PC-9 (cell line): ENCODE measurements at regions of chr7 and their contacts with region 1.

Region 1: DNA sequence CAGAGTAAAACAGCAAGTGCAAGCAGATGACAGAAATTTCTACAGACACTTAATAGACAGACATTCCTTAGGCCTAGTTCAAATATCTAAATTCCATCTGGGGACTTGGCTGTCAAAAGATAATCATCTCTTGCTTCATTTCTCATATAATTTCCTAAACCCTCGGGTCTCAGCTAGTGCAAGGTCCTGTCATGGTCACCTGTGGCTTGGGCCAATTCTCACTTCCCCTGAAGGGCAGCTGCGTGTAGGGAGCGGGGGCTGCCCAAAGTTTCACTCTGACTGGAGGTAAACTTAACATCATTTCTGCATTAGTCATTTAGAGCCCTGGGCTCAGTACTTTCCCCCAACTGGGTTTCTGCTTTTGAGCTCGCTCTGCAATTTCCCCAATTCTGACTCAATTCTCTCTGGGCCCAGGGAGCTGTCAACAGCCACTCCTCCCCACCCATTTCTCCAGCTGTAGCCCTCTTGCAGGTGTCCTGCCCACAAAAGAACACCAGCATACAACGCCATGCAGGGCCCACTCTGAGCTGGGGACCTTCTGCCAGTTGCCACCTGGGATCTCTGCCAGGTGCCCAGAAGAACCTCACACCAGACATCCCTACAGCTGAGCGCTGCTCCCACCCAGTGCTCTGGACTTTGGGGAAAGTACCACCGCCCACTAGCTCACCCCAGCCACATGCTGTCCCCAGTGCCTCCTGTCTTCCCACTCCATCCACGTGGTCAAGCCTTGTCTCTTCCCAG is 38.0 kb downstream of the VOPP1 start:
- DNase-seq: peak; percentile 71 to 100
- H3K4me3 ChIP-seq: no peak overlapping the region; the same call in 1 of the 2 replicates
- H3K27ac ChIP-seq: peak overlapping the region; percentile 74
- H3K4me1 ChIP-seq: peaks cover 65% of the 10 kb centered on the region
- H3K27me3 ChIP-seq: no peaks in the 10 kb centered on the region
- CTCF ChIP-seq: no peak

Region 2: DNA sequence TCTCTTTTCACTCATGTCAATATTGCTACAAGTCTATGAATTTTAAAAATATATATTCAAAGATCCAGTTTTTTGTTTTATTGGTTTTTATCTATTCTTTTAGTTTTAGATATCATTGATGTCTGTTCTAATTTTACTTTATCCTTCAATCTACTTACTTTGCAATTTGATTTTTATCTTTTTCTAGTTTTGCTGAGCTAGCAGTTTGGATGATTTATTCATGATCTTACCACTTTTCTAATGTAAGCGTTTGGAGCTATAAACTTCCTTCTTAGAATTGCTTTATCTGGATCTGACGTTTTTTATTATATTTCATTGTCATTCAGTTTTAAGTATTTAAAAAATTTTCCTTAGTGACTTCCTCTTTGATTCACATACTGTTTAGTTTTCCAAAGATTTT is 1656.7 kb before region 1 on chr7:
- CTCF ChIA-PET with region 1: no interaction called
- POLR2A ChIA-PET with region 1: interaction called, 13 read pairs
- intact Hi-C with region 1: no loop called
- DNase-seq: no peak
- H3K4me3 ChIP-seq: no peak overlapping the region
- H3K27ac ChIP-seq: no peak overlapping the region
- H3K4me1 ChIP-seq: no peaks in the 10 kb centered on the region
- H3K27me3 ChIP-seq: no peaks in the 10 kb centered on the region
- CTCF ChIP-seq: no peak

Region 3: GRCh38 chr7:55030314-55030713 is 504.0 kb before region 1 on chr7:
- CTCF ChIA-PET with region 1: no interaction called
- POLR2A ChIA-PET with region 1: no interaction called
- intact Hi-C with region 1: no loop called
- DNase-seq: peak in 1 of 2 experiments; percentile 59
- H3K4me3 ChIP-seq: no peak overlapping the region
- H3K27ac ChIP-seq: peak overlapping the region; percentile 31
- H3K4me1 ChIP-seq: peaks cover 78% of the 10 kb centered on the region
- H3K27me3 ChIP-seq: no peaks in the 10 kb centered on the region
- CTCF ChIP-seq: no peak

Region 4: DNA sequence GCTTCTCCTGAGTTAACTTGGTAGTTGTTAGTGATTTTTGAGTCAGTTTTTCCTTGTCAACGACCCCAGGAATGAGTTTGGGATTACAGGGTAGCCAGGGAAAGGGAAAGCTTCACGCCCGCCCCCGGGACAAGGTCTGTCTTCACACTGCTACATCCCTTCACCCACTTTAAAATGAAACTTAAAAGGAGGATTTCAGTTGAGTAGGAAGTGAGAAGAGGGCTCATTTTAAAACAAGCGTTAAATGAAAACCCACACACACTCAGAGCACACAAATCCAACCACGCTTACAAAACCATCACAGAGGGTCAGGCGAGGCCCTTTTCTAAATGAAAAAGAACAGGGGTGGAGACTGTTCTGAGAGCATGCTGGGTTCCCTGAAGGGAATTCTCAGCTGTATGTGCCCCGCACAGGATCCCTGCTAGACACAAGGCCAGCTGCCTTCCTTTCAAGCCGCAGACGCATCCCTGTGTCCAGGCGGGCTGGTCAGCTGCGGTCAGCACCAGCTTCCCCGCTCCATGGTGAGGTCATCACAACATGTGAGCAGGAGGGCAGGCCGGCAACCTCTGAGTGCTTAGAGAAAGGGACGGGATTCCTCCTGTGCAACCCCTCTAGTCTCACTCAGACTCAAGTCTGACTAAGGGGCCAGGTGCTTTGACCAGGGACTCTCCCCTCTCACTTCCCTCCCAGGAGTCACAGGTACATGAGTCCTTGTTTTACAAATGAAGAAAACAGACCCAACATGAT is 403.8 kb before region 1 on chr7:
- CTCF ChIA-PET with region 1: no interaction called
- POLR2A ChIA-PET with region 1: no interaction called
- intact Hi-C with region 1: no loop called
- DNase-seq: peak in 1 of 2 experiments; percentile 58
- H3K4me3 ChIP-seq: no peak overlapping the region
- H3K27ac ChIP-seq: peak overlapping the region; percentile 92
- H3K4me1 ChIP-seq: peaks cover 93% of the 10 kb centered on the region
- H3K27me3 ChIP-seq: no peaks in the 10 kb centered on the region
- CTCF ChIP-seq: no peak

Region 5: DNA sequence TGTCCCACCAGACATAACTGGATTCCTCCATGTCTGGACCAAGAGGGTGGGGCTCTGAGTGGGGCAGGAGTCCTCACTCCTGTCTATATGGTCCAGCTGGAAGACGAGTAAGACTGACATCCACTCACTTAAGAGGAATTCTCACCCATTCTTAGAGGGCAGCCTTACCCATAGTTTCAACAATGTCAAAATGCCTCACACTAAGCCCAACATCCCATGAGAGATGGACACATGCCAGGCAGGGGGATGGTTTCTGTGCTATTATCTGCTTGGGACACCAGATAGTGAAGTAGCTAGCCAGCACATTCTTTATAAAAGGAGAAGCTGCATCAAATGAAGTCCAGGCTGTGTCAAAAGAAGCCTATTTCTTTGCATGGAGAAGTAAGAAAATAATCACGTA is 173.9 kb before region 1 on chr7:
- CTCF ChIA-PET with region 1: no interaction called
- POLR2A ChIA-PET with region 1: no interaction called
- intact Hi-C with region 1: no loop called
- DNase-seq: no peak
- H3K4me3 ChIP-seq: no peak overlapping the region
- H3K27ac ChIP-seq: no peak overlapping the region
- H3K4me1 ChIP-seq: peaks cover 10% of the 10 kb centered on the region
- H3K27me3 ChIP-seq: peaks cover 55% of the 10 kb centered on the region
- CTCF ChIP-seq: no peak

Region 6: DNA sequence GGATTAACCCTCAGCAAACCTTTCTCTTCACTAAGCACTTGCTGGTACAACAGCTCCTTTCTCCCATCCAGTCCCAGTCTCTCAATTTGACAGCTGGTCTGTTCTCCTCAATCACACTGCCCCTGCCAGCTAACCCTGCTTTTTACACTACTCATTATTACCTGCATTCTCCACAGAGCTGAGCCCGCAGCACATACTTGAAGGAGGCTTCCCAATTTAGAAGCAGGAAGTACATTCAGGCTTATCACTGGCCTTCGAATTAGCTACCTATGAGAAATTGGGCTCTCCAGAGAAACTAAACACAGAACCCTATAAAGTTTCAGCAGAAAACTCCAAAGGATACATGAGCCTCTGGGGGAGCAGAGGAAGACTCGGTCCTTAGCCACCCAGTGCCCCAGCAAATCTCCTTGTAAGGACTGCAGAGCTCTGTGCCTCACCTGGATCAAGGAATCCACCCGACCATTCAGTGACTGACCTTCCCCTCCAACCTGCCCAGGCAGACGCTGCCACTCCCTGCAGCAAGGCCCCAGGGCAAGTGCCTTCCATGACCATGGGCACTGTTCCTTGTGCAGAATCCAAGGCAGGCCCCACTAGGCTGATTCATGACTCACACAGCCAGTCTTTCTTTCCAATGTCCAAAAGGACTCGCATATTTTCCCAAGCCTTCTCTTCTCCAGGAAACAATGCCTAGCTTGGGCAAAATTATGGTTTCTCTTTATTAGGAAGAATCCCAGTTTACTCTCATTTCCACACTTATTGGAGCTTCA is 30.1 kb before region 1 on chr7:
- CTCF ChIA-PET with region 1: interaction called, 3 read pairs
- POLR2A ChIA-PET with region 1: no interaction called
- intact Hi-C with region 1: loop called (anchors 1 kb)
- DNase-seq: peak; percentile 68 to 91
- H3K4me3 ChIP-seq: no peak overlapping the region
- H3K27ac ChIP-seq: peak overlapping the region; percentile 23
- H3K4me1 ChIP-seq: peaks cover 29% of the 10 kb centered on the region
- H3K27me3 ChIP-seq: no peaks in the 10 kb centered on the region
- CTCF ChIP-seq: no peak

Region 7: DNA sequence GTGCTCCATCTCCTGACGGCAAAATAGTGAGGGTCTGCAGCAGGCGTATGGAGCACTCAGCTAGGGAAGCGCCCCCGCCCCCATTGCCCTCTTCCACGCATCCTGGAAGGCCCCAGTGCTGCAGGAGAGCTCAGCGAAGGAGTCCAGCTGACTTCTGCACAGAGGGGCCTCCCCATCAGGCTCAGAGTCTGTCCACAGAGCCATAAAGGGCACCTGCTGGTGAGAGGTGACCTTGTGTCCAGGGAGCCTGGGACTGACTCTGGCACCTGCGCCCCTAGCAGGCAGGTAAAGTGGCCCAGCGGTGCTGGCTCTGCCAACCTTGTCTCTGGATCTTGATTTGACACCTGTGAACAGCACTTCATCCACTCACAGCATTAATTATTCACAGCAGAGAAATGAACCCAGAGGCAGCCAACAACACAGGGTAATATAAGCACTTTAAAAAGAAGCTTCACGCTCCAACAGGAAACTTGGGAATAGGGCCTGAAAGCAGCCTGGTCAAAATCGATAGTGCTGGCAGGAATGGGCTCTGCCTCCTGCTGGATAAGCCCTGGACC is 21.6 kb before region 1 on chr7:
- CTCF ChIA-PET with region 1: interaction called, 6 read pairs
- POLR2A ChIA-PET with region 1: interaction called, 16 read pairs
- intact Hi-C with region 1: no loop called
- DNase-seq: no peak
- H3K4me3 ChIP-seq: no peak overlapping the region
- H3K27ac ChIP-seq: no peak overlapping the region
- H3K4me1 ChIP-seq: no peaks in the 10 kb centered on the region
- H3K27me3 ChIP-seq: no peaks in the 10 kb centered on the region
- CTCF ChIP-seq: no peak

Region 8: GRCh38 chr7:55546829-55547228 is 12.5 kb after region 1 on chr7:
- CTCF ChIA-PET with region 1: interaction called, 3 read pairs
- POLR2A ChIA-PET with region 1: interaction called, 13 read pairs
- intact Hi-C with region 1: loop called (anchors 1 kb)
- DNase-seq: peak; percentile 95 to 100
- H3K4me3 ChIP-seq: peak overlapping the region; percentile 24; the same call in 1 of the 2 replicates
- H3K27ac ChIP-seq: peak overlapping the region; percentile 71
- H3K4me1 ChIP-seq: peaks cover 71% of the 10 kb centered on the region
- H3K27me3 ChIP-seq: no peaks in the 10 kb centered on the region
- CTCF ChIP-seq: no peak

Region 9: DNA sequence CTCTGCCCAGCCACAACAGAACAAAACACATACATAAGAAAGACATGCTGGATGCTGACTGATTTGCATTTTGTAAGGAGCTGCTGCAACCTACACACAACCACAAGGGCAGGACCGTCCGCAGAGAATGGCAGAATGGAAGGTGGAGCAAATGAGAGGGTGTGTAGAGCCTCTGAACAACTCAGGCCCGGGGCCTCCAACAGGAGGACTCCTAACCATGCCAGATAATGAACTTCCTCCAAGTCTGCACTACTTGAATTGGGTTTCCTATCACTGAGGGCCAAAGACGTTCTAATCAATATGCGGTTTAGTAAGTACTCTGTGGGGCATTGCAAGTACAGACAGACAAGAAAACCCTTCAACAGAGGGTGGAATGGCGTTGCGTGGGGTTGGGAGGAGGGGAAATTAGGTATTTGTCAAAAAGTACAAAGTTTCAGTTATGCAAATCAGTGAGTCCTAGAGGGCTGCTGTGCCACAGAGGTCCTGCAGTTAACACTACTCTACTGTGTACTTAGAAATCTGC is 23.4 kb after region 1 on chr7:
- CTCF ChIA-PET with region 1: interaction called, 4 read pairs
- POLR2A ChIA-PET with region 1: interaction called, 3 read pairs
- intact Hi-C with region 1: loop called (anchors 1 kb)
- DNase-seq: no peak
- H3K4me3 ChIP-seq: no peak overlapping the region
- H3K27ac ChIP-seq: peak overlapping the region; percentile 82
- H3K4me1 ChIP-seq: peaks cover 81% of the 10 kb centered on the region
- H3K27me3 ChIP-seq: no peaks in the 10 kb centered on the region
- CTCF ChIP-seq: no peak

Region 10: GRCh38 chr7:55572378-55573233 is 38.3 kb after region 1 on chr7 and contains the start of gene VOPP1:
- CTCF ChIA-PET with region 1: no interaction called
- POLR2A ChIA-PET with region 1: interaction called, 8 read pairs
- intact Hi-C with region 1: loop called (anchors 1 kb)
- DNase-seq: peak; percentile 59 to 84
- H3K4me3 ChIP-seq: peak within 1 kb of the TSS; percentile 91
- H3K27ac ChIP-seq: peak within 1 kb of the TSS; percentile 80
- H3K4me1 ChIP-seq: peaks cover 49% of the 10 kb centered on the region
- H3K27me3 ChIP-seq: no peaks in the 10 kb centered on the region
- CTCF ChIP-seq: no peak
- total RNA-seq, gene VOPP1: 200 and 207 TPM in 2 replicates